Mucosa of descending colon (tissue), 3 donors: ENCODE measurements at regions of chr9 and their contacts with region 1.

Region 1: DNA sequence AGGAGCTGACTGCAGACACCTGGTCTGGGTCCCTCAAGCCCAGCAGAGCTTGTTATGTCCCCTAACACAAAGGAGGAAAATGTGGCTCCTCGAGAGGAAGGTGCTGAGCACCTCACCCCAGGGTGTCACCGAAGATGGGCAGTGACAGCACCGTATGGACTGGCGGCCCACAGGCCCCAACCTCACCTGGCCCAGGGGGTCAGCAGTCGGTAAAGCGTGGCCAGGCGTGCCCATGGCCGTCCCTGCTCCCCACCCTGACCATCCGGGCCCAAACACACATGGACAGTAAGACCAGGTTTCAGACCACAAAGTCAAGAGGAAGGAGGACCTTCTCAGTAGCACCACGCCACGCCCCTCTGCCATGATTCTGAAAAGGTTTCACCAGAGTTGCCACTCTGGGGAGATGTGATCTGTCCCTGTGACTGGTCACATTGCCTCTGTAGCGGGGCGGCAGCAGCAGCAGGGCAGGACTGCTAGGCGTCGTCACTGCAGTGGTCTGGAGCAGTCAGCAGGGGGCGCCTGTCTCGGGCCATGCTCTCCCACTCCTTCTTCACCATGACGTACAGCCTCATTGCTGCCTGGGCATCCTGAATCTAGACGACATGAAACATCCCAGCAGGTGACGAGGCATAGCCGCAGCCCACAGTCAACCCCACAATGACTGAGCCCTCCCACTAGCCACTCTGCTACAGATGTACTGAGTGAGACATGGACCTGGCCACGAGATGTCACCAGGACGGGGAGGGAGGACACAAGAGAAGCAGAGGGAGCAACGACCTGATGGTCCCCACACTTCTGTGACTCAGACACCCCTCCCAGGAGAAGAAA is 11.1 kb downstream of the REXO4 start:
- DNase-seq: peak; percentile 79 to 86 (median 85)
- ATAC-seq: peak; percentile 91
- H3K4me3 ChIP-seq: no peak overlapping the region
- H3K4me1 ChIP-seq: no peaks in the 10 kb centered on the region
- CTCF ChIP-seq: peak; percentile 86

Region 2: DNA sequence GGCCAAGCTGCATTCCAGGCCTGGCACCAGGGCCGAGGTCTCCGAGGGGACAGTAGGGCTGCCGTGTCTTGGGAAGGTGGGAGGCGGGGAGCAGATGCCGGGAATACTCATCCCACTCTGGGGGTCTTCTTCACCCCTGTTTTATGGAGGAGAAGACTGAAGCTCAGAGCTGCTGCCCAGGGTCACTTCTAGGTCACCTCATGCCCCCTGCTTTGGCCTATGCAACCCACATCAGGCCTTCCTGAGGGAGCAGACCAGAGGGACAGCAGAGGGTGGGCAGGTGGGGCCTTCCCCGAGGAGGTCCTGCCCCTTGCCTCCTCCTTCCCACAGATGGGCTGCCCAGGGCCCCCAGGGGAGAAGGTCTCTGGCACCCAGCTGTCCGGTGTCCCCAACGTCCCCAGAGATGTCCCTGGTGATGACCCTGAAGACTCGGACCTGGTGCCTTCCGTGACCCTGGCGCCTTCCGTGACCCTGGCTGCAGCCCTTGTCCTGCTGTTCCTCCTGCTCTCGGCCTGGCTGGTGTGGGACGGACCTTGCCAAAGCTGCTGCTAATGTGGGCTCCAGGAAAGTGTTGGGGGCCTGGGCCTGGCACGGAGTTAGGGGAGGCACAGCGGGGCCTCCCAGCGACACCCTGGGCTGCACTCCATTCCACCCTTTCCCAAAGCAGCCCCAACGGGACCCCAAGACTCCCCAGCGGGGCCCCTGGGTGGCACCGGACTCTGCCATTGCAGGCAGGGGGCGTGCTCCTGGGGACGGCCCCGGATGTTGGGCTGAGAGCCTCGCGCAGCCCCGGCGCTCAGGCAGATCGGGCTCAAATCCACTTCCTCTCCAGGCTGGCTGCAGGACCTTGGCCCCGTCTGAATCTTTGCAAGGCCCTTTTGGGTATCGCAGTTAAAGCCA is 78.9 kb after region 1 on chr9:
- intact Hi-C with region 1: loop called (anchors 5 kb)
- DNase-seq: peak in 2 of 3 donors; percentile 38 to 46
- ATAC-seq: peak; percentile 36
- H3K4me3 ChIP-seq: no peak overlapping the region
- H3K4me1 ChIP-seq: no peaks in the 10 kb centered on the region
- CTCF ChIP-seq: no peak